A673 (cell line): ENCODE measurements at regions of chr5 and their contacts with region 1.

Region 1: DNA sequence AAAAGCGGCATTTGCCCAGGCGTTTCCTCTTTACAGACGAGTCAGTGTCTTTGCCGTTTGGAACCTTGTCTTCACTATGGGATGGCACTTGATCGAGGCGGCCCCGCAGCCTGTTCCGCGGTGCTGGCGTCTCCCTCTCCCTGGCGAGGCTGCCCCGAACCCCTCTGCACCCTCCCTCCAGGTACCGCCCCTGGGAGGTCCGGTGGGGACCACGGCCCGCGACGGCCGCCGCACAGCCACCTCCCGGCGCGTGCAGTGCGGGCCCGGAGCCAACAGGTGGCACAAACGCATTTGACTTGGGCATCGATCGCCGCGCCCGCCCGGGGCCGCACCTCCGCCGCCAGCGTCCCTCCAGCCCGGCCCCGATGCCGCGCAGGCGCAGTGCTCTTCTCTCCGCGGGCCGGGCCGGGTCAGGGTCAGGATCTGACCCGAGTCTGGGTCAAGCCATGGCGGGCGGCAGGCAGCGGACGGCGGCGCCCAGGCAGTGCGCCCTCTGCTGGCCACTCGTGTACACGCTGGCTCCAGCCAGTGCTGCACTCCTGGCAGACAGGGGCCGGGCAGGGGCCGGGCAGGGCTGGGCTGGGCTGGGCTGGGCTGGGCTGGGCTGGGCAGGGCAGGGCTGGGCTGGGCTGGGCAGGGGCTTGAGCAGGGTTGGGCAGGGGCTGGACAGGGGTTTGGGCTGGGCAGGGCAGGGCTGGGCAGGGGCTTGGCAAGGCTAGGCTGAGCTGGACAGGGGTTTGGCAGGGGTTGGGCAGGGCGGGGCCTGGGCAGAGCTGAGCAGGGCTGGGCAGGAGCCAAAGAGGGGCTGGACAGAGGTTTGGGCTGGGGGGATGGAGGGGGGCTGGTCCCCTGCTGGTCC is 155.8 kb upstream of the IRX4 start:
- DNase-seq: peak; percentile 31
- H3K4me3 ChIP-seq: peak overlapping the region; percentile 17
- H3K27ac ChIP-seq: no peak overlapping the region
- H3K4me1 ChIP-seq: peaks cover 4% of the 10 kb centered on the region
- H3K27me3 ChIP-seq: peaks cover 69% of the 10 kb centered on the region
- CTCF ChIP-seq: peak; percentile 68

Region 2: DNA sequence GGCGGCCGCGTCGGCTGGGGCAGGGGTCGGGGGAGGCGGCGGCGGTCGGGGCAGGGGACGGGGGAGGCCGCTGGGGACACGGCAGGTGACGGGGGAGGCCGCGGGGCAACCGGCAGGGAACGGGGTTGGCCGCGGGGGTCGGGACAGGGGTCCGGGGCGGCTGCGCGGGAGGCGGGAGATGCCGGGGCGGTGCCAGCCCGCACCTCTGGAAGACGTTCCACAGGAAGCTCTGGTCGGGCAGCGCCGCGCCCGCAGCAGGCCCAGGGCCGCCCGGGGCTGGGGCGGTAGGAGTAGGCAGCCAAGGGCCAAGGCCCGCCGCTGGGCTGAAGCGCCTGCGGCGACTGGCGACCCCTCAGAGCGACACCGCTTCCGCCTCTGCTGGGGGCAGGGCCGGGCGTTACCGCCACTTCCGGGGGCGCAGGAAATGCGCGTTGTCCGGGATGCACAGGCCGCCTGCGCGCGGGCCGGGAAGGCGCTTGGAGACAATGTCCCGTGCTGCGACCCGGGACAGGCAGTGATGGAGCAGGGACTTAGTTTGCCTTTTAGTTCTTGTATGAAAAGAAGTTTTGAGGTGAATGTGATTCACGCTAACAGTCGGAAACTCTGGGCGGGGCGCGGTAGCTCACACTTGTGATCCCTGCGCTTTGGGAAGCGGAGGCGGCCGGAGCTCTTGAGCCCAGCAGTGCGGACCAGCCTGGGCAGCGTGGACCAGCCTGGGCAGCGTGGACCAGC is 404.8 kb before region 1 on chr5:
- CTCF ChIA-PET with region 1: no interaction called
- POLR2A ChIA-PET with region 1: no interaction called
- intact Hi-C with region 1: no loop called
- DNase-seq: peak; percentile 88
- H3K4me3 ChIP-seq: peak overlapping the region; percentile 66
- H3K27ac ChIP-seq: peak overlapping the region; percentile 62
- H3K4me1 ChIP-seq: no peaks in the 10 kb centered on the region
- H3K27me3 ChIP-seq: no peaks in the 10 kb centered on the region
- CTCF ChIP-seq: no peak

Region 3: DNA sequence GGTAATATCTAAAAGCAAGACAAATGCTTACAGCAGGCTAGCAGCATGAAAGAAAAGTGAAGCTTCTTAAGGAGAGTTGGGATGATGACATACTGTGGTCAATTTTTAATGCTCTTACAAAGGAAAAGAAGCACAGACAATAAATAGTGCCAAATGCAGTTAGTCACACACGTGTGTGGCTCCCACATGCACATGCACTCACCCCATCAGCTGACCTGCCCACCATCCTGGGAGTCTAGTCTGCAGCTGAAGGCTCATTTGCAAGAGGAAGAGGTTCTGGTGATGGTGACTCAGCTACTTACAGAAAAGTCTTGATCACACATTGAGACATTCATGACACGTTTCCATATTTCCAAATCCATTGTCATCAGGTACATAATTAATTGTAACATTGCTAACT is 368.2 kb before region 1 on chr5:
- CTCF ChIA-PET with region 1: no interaction called
- POLR2A ChIA-PET with region 1: no interaction called
- intact Hi-C with region 1: loop called (anchors 10 kb)
- DNase-seq: no peak
- H3K4me3 ChIP-seq: no peak overlapping the region
- H3K27ac ChIP-seq: no peak overlapping the region
- H3K4me1 ChIP-seq: no peaks in the 10 kb centered on the region
- H3K27me3 ChIP-seq: peaks cover 61% of the 10 kb centered on the region
- CTCF ChIP-seq: no peak

Region 4: DNA sequence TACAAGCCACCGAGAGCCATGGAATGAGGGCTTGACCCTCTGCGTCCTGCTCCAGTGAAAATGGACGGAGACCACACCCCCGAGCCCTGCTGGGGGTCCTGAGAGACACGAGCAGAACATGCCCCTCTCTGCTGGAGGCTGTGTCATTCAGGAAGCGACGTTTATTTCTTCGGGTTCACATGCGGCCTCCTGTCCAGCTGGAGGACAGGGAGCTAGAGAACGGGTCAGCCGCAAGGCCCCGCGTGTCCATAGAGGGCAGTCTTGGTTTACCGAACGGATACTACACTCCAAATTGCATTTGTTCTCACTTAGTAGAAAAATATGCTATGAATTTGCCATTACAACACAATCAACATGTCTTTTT is 275.0 kb before region 1 on chr5:
- CTCF ChIA-PET with region 1: no interaction called
- POLR2A ChIA-PET with region 1: no interaction called
- intact Hi-C with region 1: loop called (anchors 10 kb)
- DNase-seq: peak; percentile 37
- H3K4me3 ChIP-seq: no peak overlapping the region
- H3K27ac ChIP-seq: no peak overlapping the region
- H3K4me1 ChIP-seq: no peaks in the 10 kb centered on the region
- H3K27me3 ChIP-seq: peaks cover 75% of the 10 kb centered on the region
- CTCF ChIP-seq: peak; percentile 67

Region 5: DNA sequence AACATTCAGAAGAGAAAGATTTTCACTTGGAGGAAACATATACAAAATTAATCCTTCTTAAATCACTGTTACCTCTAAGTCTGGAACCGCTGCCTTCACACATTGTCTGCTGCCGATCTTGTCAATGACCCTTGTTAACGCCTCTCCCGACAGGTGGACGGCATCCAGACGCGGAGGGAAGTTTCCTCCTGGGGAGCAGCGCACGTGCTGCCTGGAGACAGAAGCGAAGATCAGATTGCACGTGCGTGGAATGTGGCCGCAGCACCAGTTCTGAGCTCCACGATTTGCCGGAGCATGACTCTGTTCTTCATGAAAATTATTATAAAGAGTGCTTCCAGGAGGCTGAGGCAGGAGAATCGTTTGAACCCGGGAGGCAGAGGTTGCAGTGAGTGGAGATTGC is 27.8 kb after region 1 on chr5:
- CTCF ChIA-PET with region 1: no interaction called
- POLR2A ChIA-PET with region 1: no interaction called
- intact Hi-C with region 1: no loop called
- DNase-seq: no peak
- H3K4me3 ChIP-seq: no peak overlapping the region
- H3K27ac ChIP-seq: no peak overlapping the region
- H3K4me1 ChIP-seq: no peaks in the 10 kb centered on the region
- H3K27me3 ChIP-seq: no peaks in the 10 kb centered on the region
- CTCF ChIP-seq: no peak

Region 6: DNA sequence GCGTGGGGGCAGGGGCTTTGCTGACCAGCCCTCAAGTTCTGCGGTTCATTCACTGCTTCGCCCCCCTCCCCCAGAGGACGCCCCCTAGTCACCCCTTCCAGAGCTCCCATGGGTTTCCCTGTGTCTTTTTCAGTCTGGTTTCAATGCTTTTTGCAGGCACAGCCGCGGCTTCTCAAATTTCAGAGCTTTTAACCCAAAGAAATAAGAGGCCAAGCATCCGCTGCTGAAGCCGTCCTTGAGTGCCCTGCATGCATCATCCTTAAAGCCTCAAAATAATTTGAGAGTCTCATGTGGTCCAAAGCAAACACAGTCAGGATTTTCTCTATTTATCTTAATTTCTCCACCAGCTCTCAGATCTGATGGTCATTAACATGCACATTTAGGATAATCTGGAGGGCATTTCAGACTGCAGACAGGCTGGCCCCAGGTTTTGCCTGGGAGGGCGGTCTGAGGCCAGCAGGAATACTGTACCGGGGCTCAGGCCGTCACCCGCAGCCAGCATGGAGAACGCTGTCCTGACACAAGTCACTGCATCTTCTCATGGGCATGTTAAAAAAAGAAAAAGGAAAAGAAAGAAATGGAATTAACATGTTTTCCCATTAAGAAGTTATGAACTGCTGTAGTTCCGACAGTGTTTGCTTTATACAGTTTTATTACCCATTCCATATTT is 265.0 kb after region 1 on chr5:
- CTCF ChIA-PET with region 1: no interaction called
- POLR2A ChIA-PET with region 1: no interaction called
- intact Hi-C with region 1: no loop called
- DNase-seq: no peak
- H3K4me3 ChIP-seq: no peak overlapping the region
- H3K27ac ChIP-seq: no peak overlapping the region
- H3K4me1 ChIP-seq: no peaks in the 10 kb centered on the region
- H3K27me3 ChIP-seq: no peaks in the 10 kb centered on the region
- CTCF ChIP-seq: no peak